Ovary (tissue), 10 donors: ENCODE measurements at regions of chr2 and their contacts with region 1.

Region 1: DNA sequence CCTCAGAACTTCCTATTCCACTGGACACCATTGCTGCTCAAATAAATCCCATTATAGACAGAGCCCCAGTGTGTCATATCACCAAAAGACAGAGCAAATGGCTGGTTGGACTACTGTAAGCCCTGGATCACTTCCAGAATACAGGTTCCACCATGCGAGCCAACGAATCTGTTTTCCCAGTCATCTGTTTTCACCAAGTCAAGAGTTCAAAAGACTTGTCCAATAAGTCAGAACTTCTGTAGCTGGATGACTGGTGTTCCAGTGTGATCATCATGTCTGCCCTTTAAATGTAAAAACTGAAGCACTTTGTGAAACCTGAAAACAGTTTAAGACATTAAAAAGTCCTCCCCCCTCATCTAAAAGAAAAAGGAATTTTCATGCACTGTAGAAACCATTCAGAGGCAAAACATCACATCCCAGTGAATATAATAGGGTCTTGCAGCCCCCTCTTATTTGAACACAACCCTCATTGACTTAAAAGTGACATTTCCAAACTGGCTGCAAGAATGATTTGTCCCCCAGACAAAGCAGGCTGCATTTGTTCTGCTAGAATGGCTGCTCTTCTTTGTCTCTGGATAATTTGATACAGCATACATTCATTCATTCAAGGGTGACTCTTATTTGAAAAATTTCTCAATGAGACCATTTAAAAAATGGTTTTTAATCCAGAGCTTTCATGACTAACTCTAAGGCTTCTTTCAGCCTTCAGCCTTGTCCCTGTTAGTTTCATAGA is 64.6 kb upstream of the TANC1 start:
- DNase-seq: no peak
- H3K4me3 ChIP-seq: no peak overlapping the region
- H3K27ac ChIP-seq: no peak overlapping the region
- H3K4me1 ChIP-seq: no peaks in the 10 kb centered on the region
- H3K27me3 ChIP-seq: no peaks in the 10 kb centered on the region
- CTCF ChIP-seq: no peak
- EP300 ChIP-seq: no peak
- POLR2A ChIP-seq: no peak

Region 2: GRCh38 chr2:159118115-159118858 is 214.4 kb after region 1 on chr2:
- intact Hi-C with region 1: loop called in 3 of 4 experiments (anchors 2 to 5 kb)
- DNase-seq: peak; percentile 84 to 92 (median 91)
- H3K4me3 ChIP-seq: no peak overlapping the region
- H3K27ac ChIP-seq: no peak overlapping the region
- H3K4me1 ChIP-seq: no peaks in the 10 kb centered on the region
- H3K27me3 ChIP-seq: no peaks in the 10 kb centered on the region
- CTCF ChIP-seq: peak; percentile 81 to 92 (median 90)
- EP300 ChIP-seq: no peak
- POLR2A ChIP-seq: no peak

Region 3: DNA sequence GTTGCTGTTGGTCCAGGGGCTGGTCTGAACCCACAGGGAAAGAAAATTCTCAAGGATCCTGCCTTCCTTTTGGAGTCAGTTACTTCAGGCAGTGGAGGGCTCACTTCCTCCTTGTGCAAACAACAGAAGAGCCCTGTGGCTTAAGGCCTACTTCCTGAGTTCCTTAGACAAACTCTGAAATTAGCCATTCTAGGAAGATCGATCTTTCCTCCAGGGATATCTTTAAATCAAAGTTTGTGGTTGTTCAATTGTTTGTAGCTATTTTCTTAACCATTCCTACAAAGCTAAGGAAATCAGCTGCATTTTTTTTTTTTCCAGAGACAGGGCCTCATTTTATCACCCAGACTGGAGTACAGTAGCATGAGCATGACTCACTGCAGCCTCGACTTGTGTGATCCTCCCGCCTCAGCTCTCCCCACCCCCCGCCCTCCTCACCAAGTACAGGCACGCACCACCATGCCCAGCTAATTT is 220.6 kb after region 1 on chr2:
- intact Hi-C with region 1: loop called in 3 of 4 experiments (anchors 2 to 5 kb)
- DNase-seq: peak in 2 of 5 donors; percentile 31 to 39
- H3K4me3 ChIP-seq: no peak overlapping the region
- H3K27ac ChIP-seq: no peak overlapping the region
- H3K4me1 ChIP-seq: no peaks in the 10 kb centered on the region
- H3K27me3 ChIP-seq: no peaks in the 10 kb centered on the region
- CTCF ChIP-seq: no peak
- EP300 ChIP-seq: no peak
- POLR2A ChIP-seq: no peak